Activated CD8-positive, alpha-beta T cell treated with anti-CD3 and anti-CD28 coated beads for 36 hours (primary cell): ENCODE measurements at regions of chr2 and their contacts with region 1.

Region 1: DNA sequence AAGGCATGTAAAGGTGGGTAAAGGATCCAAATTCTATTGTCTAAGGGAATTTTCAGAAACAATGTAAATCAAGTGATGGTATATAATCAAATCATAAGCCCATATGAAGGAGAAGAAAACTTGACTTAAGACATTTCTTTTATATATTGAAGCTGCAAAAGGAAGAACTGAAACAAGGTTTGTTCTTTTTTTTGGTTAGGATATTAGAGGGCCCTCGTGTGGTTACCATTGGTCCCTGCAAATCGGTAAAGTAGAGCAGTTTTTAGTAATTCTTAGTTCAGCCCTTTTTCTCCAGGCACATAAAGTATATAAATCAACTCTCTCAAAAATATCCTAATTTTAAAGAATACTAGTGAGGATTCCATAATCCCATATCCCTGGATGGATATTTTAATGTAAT is 105.6 kb upstream of the STK17B start:
- DNase-seq: peak; percentile 60
- ATAC-seq: peak; percentile 18
- H3K4me3 Mint-ChIP-seq: no peak overlapping the region
- H3K27ac Mint-ChIP-seq: peak overlapping the region; percentile 93
- H3K4me1 Mint-ChIP-seq: peaks cover 54% of the 10 kb centered on the region
- H3K27me3 Mint-ChIP-seq: no peaks in the 10 kb centered on the region
- CTCF ChIP-seq: peak; percentile 72

Region 2: GRCh38 chr2:196149948-196150347 is 127.1 kb before region 1 on chr2:
- CTCF ChIA-PET with region 1: interaction called, 7 read pairs
- POLR2A ChIA-PET with region 1: interaction called, 4 read pairs
- intact Hi-C with region 1: loop called (anchors 5 kb)
- DNase-seq: no peak
- ATAC-seq: peak; percentile 14
- H3K4me3 Mint-ChIP-seq: peak overlapping the region; percentile 57
- H3K27ac Mint-ChIP-seq: peak overlapping the region; percentile 91
- H3K4me1 Mint-ChIP-seq: peaks cover 83% of the 10 kb centered on the region
- H3K27me3 Mint-ChIP-seq: no peaks in the 10 kb centered on the region
- CTCF ChIP-seq: no peak

Region 3: GRCh38 chr2:196182439-196183171 is 94.4 kb before region 1 on chr2:
- CTCF ChIA-PET with region 1: interaction called, 24 read pairs
- POLR2A ChIA-PET with region 1: no interaction called
- intact Hi-C with region 1: no loop called
- DNase-seq: no peak
- ATAC-seq: peak; percentile 61
- H3K4me3 Mint-ChIP-seq: peak overlapping the region; percentile 76
- H3K27ac Mint-ChIP-seq: peak overlapping the region; percentile 93
- H3K4me1 Mint-ChIP-seq: peaks cover 76% of the 10 kb centered on the region
- H3K27me3 Mint-ChIP-seq: no peaks in the 10 kb centered on the region
- CTCF ChIP-seq: no peak

Region 4: GRCh38 chr2:196233021-196233804 is 43.8 kb before region 1 on chr2:
- CTCF ChIA-PET with region 1: interaction called, 23 read pairs
- POLR2A ChIA-PET with region 1: interaction called, 5 read pairs
- intact Hi-C with region 1: no loop called
- DNase-seq: no peak
- ATAC-seq: peak; percentile 39
- H3K4me3 Mint-ChIP-seq: no peak overlapping the region
- H3K27ac Mint-ChIP-seq: peak overlapping the region; percentile 96
- H3K4me1 Mint-ChIP-seq: peaks cover 86% of the 10 kb centered on the region
- H3K27me3 Mint-ChIP-seq: no peaks in the 10 kb centered on the region
- CTCF ChIP-seq: no peak

Region 5: GRCh38 chr2:196263181-196263747 is 13.7 kb before region 1 on chr2:
- CTCF ChIA-PET with region 1: interaction called, 31 read pairs
- POLR2A ChIA-PET with region 1: interaction called, 17 read pairs
- intact Hi-C with region 1: no loop called
- DNase-seq: peak; percentile 62
- ATAC-seq: peak; percentile 60
- H3K4me3 Mint-ChIP-seq: peak overlapping the region; percentile 67
- H3K27ac Mint-ChIP-seq: peak overlapping the region; percentile 90
- H3K4me1 Mint-ChIP-seq: peaks cover 79% of the 10 kb centered on the region
- H3K27me3 Mint-ChIP-seq: no peaks in the 10 kb centered on the region
- CTCF ChIP-seq: no peak

Region 6: DNA sequence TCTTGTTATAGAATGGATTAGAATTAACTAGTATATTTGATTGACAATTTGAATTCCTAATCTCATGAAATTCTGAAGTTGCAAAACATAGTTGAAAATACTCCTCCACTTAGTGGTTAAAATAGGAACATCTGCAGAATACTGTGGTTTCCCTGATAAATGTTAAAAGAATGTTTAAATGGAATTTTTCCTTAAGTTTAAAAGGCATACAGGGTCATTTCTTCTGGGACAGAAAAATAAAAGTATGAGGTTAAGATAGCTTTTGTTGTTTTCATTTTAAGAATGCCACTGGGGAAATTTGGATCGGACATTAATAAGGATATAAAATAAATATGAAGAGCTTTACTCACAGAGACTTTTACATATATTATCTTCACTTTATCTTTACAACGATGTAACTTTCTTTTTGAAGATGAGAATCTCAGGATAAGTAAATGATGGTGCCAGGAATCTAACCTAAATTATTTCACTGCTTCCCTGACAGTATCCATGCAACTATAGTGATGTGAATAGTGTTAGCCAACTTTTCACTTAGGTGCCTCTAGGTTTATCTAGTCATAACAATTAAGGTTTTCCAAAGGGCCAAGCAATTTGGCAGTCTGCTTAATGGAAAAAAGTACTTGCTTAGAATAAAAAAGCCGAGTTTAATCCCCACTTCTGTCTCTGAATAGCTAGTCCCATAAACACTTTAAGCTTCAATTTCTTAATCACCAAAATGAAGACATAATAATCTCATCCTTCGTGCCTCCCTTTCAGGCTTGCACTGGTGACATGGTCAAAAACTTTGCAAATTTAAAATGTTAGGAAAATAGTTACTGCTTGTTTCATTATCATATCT is 46.2 kb after region 1 on chr2:
- CTCF ChIA-PET with region 1: no interaction called
- POLR2A ChIA-PET with region 1: no interaction called
- intact Hi-C with region 1: no loop called
- DNase-seq: no peak
- ATAC-seq: no peak
- H3K4me3 Mint-ChIP-seq: no peak overlapping the region
- H3K27ac Mint-ChIP-seq: no peak overlapping the region
- H3K4me1 Mint-ChIP-seq: no peaks in the 10 kb centered on the region
- H3K27me3 Mint-ChIP-seq: no peaks in the 10 kb centered on the region
- CTCF ChIP-seq: no peak